ENCODE measurements at regions of chr10 and their contacts with region 1.

Region 1: DNA sequence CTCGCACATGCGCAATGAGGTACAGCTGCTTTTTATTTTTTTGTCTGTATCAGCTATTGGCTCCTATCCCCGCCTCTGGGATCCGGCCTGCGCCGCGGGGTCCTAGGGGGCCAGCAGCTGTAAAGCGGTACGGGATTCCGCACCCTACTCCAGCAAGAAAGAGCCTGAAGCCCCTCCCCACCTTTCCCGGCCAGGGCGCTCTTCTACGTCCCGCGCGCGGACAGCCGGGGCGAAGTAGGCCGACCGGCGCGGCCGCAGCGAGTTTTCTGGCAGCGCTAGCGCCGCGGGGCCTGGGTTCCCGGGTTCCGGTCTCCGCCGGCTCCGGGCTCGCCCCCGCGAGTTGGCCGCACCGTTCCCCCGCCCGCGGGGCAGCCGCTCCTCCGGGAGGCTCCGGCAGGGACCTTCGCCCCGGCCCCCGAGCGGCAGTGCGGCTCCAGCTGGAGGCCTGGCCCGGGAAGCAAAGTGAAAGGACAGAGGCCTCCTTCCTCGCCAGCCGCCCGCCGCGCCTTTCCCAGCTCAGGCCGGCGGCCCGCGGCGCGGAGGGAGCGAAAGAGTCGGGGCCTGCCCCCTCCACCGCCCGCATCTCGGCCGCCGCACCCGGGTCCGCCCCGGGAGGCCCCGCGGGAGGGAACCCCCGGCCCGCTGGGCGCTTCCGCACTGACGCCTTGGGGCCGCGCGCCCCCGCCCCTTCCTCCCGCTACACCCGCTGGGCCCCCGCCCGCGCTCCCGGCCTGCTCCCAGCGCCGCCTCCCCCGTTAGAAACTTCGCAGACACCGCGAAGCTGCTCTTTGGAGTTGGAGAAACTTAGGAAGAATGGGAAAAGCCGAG is 4.7 kb upstream of the SPAG6 start:
- DNase-seq: peak; percentile 77
- ATAC-seq: peak; percentile 61
- H3K4me3 Mint-ChIP-seq: peak overlapping the region; percentile 90
- H3K27ac Mint-ChIP-seq: peak overlapping the region; percentile 88
- H3K4me1 Mint-ChIP-seq: peaks cover 34% of the 10 kb centered on the region
- H3K27me3 Mint-ChIP-seq: peaks cover 45% of the 10 kb centered on the region
- CTCF ChIP-seq: no peak

Region 2: DNA sequence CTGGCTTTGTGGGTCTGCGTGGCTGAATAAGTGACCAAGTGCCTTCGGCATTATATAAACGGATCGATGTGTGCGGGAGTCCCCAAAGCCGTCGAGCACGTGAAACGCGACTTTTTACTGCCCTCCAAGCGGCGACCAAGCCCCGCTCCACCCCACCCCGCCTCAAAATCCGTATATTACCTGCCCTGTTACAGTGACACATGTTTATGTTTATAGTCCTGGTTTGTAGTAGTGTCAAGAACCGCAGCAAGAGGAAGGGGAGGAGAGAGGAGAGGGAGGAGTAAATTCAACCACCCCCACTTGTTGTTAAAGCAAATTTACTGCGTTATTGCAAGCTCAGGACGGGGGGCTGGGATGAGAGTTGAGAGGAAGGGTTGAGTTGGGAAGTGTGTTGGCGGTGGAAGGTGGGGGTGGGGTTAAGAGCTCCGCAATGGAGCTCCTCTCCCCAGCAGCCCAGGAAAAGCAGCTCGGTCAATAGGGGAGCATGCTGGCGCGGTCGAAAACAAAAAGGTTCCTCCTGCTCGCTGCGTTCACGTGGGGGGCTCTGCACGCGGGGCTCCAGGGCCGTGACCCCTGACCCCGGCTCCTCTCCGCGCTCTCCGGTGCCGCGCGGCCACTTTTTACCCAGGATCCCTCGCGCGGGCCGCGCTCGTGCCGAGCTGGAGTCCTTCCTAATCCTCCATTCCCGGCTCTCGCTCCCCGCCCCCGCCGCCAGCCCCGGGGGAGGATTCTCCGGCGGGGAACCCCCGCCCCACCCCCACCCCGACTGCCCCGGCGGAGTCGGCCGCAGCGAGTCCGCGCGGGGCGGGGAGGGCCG is 815.0 kb before region 1 on chr10 and contains the start of gene SKIDA1:
- CTCF ChIA-PET with region 1: interaction called, 4 read pairs
- POLR2A ChIA-PET with region 1: interaction called, 12 read pairs
- intact Hi-C with region 1: loop called (anchors 2 kb)
- DNase-seq: peak; percentile 35
- ATAC-seq: peak; percentile 65
- H3K4me3 Mint-ChIP-seq: peak within 1 kb of the TSS; percentile 89
- H3K27ac Mint-ChIP-seq: peak within 1 kb of the TSS; percentile 88
- H3K4me1 Mint-ChIP-seq: peaks cover 27% of the 10 kb centered on the region
- H3K27me3 Mint-ChIP-seq: peaks cover 37% of the 10 kb centered on the region
- CTCF ChIP-seq: no peak
- total RNA-seq, gene SKIDA1: 0.60 TPM in 1 of 2 replicates, not detected in the other

Region 3: GRCh38 chr10:22228943-22229801 is 111.4 kb before region 1 on chr10:
- CTCF ChIA-PET with region 1: interaction called, 4 read pairs
- POLR2A ChIA-PET with region 1: interaction called, 9 read pairs
- intact Hi-C with region 1: loop called (anchors 1 kb)
- DNase-seq: peak; percentile 81
- ATAC-seq: peak; percentile 79
- H3K4me3 Mint-ChIP-seq: peak overlapping the region; percentile 88
- H3K27ac Mint-ChIP-seq: peak overlapping the region; percentile 96
- H3K4me1 Mint-ChIP-seq: peaks cover 15% of the 10 kb centered on the region
- H3K27me3 Mint-ChIP-seq: peaks cover 7% of the 10 kb centered on the region
- CTCF ChIP-seq: no peak

Region 4: GRCh38 chr10:22325272-22326144 is 15.1 kb before region 1 on chr10:
- CTCF ChIA-PET with region 1: no interaction called
- POLR2A ChIA-PET with region 1: interaction called, 41 read pairs
- intact Hi-C with region 1: loop called (anchors 1 kb)
- DNase-seq: peak; percentile 67
- ATAC-seq: peak; percentile 33
- H3K4me3 Mint-ChIP-seq: peak overlapping the region; percentile 90
- H3K27ac Mint-ChIP-seq: peak overlapping the region; percentile 89
- H3K4me1 Mint-ChIP-seq: peaks cover 41% of the 10 kb centered on the region
- H3K27me3 Mint-ChIP-seq: no peaks in the 10 kb centered on the region
- CTCF ChIP-seq: no peak

Region 5: DNA sequence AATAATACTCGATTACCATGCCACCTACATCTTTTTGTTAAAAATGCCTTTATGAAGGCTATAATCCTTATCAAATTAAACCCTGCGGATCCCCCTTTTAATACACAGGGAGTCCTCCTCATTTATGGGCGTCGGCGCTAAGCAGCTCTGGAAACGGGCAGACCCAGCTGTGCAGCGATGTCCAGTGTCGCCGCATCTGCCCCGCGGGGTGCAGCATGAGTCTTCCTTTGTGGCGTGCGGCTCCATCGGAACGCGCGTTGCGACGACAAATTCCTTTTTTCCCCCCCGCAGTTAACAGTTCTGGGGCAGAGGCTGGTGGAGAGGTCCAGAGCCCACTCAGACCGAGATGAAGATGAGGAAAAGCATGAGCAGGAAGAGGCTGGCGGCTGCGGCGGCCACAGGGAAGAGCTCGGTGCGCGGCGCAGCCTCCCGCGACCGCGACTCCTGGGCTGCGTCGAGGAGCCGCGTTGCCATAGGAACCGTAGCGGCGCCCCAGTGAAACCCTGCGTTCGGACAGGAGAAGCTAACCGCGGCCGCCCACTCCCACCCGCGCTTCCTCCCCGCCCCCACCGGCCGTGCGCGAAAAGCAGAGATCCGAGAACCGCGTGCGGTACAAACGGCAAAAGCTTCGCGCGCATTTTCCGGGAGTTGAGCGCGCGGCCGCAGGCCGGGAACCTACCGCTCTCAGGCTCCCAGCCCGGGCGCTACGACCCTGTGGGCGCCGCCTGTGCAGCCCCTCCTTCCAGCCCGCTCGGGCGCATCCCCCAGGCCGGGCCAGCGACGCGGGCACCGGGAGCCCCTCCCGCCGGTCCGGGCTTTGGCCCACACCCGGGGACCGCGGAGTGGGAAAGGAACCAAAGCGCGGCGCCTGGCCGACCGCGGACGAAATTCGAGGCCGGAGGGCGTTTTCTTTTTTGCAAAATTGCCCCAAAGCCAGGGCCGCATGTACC is 135.3 kb after region 1 on chr10:
- CTCF ChIA-PET with region 1: interaction called, 3 read pairs
- POLR2A ChIA-PET with region 1: interaction called, 6 read pairs
- intact Hi-C with region 1: loop called (anchors 1 kb)
- DNase-seq: peak; percentile 36
- ATAC-seq: peak; percentile 62
- H3K4me3 Mint-ChIP-seq: peak overlapping the region; percentile 87
- H3K27ac Mint-ChIP-seq: no peak overlapping the region
- H3K4me1 Mint-ChIP-seq: peaks cover 24% of the 10 kb centered on the region
- H3K27me3 Mint-ChIP-seq: peaks cover 47% of the 10 kb centered on the region
- CTCF ChIP-seq: no peak

Measured in activated B cell treated with CpG ODN at 0.5 μM for 24 hours (primary cell).